Adrenal gland (tissue), 19 donors: ENCODE measurements at regions of chr4 and their contacts with region 1.

Region 1: DNA sequence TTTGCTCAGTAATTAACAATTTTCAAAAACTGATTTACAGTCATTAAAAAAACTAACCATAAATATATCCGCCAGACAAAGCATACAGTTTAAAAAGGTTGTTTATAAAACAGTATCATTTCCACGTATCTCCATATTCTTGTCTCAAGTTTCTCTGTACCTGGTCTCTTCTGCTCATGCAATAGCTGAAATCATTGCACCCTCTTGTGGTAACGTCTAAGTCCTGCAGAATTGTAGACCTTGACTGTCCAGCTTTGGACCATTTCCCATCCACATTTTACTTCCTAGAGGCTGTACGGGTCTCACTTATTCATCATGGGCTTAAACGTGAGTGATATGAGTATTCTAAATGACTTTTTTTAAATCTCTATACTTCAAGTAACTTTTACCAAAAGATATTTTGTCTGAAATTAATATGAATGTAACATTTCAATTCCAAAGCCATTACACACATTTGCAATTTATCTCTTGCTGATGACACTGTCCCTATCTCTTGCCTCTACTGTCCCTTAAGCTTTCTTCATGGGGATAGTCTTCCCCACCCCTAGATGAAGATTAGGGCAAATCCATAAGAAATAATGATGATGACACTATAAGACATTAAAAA is 118.5 kb downstream of the BTC start:
- DNase-seq: peak in 5 of 7 donors; percentile 32 to 57 (median 37)
- H3K4me3 ChIP-seq: no peak overlapping the region
- H3K27ac ChIP-seq: no peak overlapping the region
- H3K4me1 ChIP-seq: no peaks in the 10 kb centered on the region
- H3K27me3 ChIP-seq: no peaks in the 10 kb centered on the region
- CTCF ChIP-seq: peak; percentile 43 to 82 (median 72)
- POLR2A ChIP-seq: no peak

Region 2: DNA sequence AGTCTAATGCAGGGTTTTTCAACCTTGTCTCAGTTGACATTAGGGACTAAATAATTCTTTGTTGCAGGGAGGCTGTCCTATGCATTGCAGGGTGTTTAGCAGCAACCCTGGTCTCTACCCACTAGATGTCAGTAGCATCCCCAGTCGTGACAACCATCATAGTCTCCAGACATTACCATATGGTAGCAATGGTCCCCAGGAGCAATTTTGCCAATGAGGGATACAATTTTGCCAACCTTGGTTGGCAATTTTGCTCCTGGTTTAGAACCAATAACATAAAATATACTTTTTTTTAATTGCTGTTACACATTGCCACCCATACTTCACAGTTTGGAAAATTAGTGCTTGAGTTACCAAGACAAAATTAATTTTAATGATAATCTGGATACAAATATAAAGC is 304.9 kb before region 1 on chr4:
- intact Hi-C with region 1: loop called (anchors 5 to 10 kb)
- DNase-seq: peak in 3 of 7 donors; percentile 12 to 14 (median 14)
- H3K4me3 ChIP-seq: no peak overlapping the region
- H3K27ac ChIP-seq: no peak overlapping the region
- H3K4me1 ChIP-seq: peaks cover under 1 to 4% of the 10 kb centered on the region in 2 donors
- H3K27me3 ChIP-seq: peaks cover 16% of the 10 kb centered on the region
- CTCF ChIP-seq: peak in 4 of 6 experiments; percentile 22 to 47 (median 38)
- POLR2A ChIP-seq: no peak

Region 3: DNA sequence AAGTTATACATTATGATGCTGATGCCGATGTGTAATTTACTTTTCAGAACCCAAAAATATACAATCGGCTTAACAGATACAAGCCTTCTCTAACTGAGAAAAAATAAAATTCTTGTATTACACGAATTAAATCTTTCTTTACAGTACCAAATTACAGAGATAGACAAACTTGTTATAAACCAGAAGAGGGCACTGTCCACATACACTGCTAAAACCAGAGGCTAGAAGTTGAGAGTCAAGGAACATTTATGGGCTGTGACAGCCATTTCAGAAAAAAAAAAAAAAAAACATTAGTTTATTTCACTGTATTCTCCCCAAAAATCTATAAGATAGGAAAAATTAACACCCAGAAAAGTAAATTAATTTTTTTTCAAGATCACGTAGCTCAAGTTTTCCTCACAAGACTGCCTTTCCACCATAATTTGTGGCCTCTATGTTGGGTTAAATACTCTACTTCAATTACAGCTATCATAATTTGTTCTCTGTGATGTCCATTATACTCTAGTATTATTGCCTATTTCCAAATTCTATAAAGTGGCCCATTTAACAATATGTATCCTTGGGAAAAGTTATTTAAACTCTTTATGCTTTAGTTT is 298.8 kb before region 1 on chr4:
- intact Hi-C with region 1: loop called (anchors 5 to 10 kb)
- DNase-seq: no peak
- H3K4me3 ChIP-seq: no peak overlapping the region
- H3K27ac ChIP-seq: no peak overlapping the region
- H3K4me1 ChIP-seq: no peaks in the 10 kb centered on the region
- H3K27me3 ChIP-seq: no peaks in the 10 kb centered on the region
- CTCF ChIP-seq: peak; percentile 27 to 67 (median 54)
- POLR2A ChIP-seq: no peak

Region 4: DNA sequence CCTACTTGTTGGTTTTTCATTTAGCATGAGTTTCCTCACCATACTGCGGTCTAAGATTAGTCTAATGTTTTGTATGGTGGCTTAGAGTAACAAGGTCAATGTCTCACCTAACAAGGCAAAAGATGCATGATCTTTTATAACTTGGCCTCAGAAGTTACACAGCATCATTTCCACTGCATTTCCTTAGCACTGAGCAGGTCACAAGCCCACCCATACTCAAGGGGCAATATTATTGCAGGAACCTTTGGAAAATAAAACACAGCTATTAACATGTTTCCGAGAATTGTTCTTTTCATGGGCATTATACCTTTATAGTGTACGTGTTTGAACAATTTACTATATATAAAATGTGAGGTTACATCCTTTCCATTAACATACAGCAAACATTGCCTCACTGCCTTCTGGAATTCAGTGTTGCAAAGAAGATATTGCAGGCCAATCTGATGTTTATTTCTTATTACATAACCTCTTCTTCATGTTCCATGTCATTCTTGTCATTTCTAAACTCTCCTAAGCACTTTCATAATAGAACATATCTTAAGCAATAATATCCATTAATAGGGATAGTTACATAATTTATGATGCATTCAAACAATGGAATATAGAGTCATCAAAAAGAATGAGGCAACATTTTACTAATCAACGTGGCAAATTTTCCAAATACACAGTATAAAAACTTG is 77.0 kb before region 1 on chr4:
- intact Hi-C with region 1: no loop called
- DNase-seq: no peak
- H3K4me3 ChIP-seq: no peak overlapping the region
- H3K27ac ChIP-seq: no peak overlapping the region
- H3K4me1 ChIP-seq: no peaks in the 10 kb centered on the region
- H3K27me3 ChIP-seq: no peaks in the 10 kb centered on the region
- CTCF ChIP-seq: no peak
- POLR2A ChIP-seq: no peak